ENCODE measurements at regions of chr12 and their contacts with region 1.

Region 1: GRCh38 chr12:40622246-40622838 is 69.9 kb upstream of the CNTN1 start:
- DNase-seq: peak in 1 of 2 donors; percentile 30
- ATAC-seq: no peak
- H3K4me3 ChIP-seq: no peak overlapping the region
- H3K27ac ChIP-seq: no peak overlapping the region
- H3K4me1 ChIP-seq: no peaks in the 10 kb centered on the region
- H3K27me3 ChIP-seq: no peaks in the 10 kb centered on the region
- CTCF ChIP-seq: peak; percentile 52

Region 2: DNA sequence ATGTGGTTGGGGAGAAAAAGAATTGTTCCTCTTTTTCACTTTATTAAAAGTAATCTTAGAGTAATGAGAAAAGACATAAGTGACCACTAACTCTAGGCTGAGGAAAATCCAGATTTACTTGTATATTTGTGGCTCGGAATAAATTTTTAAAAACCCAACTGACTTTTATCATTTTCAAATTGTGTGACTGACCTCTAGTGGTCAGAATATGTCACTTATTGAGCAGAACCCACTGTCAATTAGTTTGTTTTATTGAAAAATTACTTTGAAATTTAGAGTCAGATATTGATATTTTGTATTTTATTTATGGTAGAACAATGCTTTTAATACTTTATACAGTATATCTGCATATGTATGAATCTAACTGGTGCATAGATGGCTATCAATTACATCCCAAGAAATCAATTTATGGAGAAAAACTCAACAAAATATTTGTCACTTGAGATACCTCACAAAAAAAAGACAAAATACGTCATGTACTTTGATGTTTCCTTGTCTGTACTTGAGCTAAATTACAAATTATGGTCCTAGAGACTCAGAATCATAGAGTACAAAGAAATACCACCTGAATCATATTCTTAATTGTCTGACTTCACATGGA is 299.3 kb after region 1 on chr12:
- intact Hi-C with region 1: loop called in 1 of 2 experiments (anchors 5 kb)
- DNase-seq: no peak
- ATAC-seq: no peak
- H3K4me3 ChIP-seq: no peak overlapping the region
- H3K27ac ChIP-seq: no peak overlapping the region
- H3K4me1 ChIP-seq: no peaks in the 10 kb centered on the region
- H3K27me3 ChIP-seq: peaks cover 0 to 2% (median 0%) of the 10 kb centered on the region in 3 donors
- CTCF ChIP-seq: peak; percentile 45

Measured in psoas muscle (tissue), 8 donors.